Activated naive CD4-positive, alpha-beta T cell treated with anti-CD3 and anti-CD28 coated beads for 36 hours (primary cell): ENCODE measurements at regions of chr16 and their contacts with region 1.

Region 1: GRCh38 chr16:50377001-50377400 is 8.2 kb upstream of the BRD7 start:
- DNase-seq: no peak
- H3K4me3 Mint-ChIP-seq: no peak overlapping the region
- H3K27ac Mint-ChIP-seq: no peak overlapping the region
- H3K4me1 Mint-ChIP-seq: peaks cover 3% of the 10 kb centered on the region
- H3K27me3 Mint-ChIP-seq: no peaks in the 10 kb centered on the region

Region 2: DNA sequence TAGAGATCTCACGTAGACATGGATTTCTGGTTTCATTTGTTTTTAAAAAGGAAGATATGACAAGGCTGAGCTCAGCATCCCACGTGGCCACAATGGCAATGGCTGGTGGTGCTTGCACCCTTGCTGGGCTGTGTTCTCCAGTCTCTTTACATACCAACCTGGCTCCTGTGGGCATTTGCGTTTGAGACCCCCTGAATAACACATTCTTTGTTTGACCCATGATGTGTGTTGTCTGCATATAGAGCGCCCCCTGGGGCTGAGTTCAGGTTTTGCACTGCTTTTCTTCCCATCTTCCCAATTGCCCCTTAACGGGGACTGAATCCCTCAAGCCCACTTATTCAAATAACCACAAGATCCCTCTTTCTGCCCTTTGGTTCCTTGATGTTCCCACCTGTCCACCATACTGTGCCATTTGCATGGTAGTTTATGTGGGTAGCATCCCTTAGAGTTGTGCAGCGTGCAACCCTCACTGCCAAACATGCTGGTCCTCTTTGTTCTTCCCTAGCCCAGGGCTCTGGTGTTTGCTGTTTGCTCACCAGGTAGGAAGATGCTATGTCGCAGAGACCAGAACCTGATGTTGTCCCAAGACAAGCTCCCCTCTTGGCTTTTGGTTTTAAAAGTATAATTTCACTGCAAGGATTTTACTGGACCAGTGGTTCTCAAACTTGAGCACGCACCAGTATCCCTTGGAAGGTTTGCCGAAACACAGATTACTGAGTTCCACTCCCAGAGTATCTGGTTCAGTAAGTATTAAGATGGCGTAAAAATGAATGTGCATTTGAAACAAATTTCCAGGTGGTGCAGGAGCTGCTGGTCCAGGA is 132.7 kb after region 1 on chr16:
- CTCF ChIA-PET with region 1: interaction called, 7 read pairs
- intact Hi-C with region 1: loop called (anchors 1 kb)
- DNase-seq: peak; percentile 67
- H3K4me3 Mint-ChIP-seq: no peak overlapping the region
- H3K27ac Mint-ChIP-seq: no peak overlapping the region
- H3K4me1 Mint-ChIP-seq: no peaks in the 10 kb centered on the region
- H3K27me3 Mint-ChIP-seq: no peaks in the 10 kb centered on the region

Region 3: DNA sequence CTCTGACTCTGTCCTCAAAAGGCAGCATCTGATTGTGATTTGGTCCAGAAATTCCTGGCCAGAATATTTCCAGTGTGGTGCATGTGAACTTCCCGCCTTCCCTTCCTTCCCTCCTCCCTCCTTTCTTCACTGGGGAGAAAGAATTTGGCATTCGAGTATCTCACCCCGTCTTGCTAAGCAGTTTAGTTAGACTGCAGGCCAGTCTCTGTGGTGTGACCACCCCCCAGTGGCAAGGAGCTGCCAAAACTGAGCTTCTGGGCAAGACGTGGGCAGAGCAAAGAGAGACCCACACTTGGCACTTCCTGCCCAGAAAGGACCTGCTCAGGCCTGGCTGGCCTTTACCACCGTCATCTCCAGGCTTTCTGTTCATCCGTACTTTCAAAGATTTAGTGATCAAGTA is 267.7 kb after region 1 on chr16:
- CTCF ChIA-PET with region 1: no interaction called
- intact Hi-C with region 1: loop called (anchors 1 kb)
- DNase-seq: peak; percentile 67
- H3K4me3 Mint-ChIP-seq: no peak overlapping the region
- H3K27ac Mint-ChIP-seq: no peak overlapping the region
- H3K4me1 Mint-ChIP-seq: peaks cover 2% of the 10 kb centered on the region
- H3K27me3 Mint-ChIP-seq: no peaks in the 10 kb centered on the region